WTC11 (cell line): ENCODE measurements at regions of chr17 and their contacts with region 1.

Region 1: GRCh38 chr17:74842599-74843351 is 16.9 kb downstream of the GRIN2C start:
- DNase-seq: peak; percentile 75
- ATAC-seq: peak; percentile 81
- H3K4me3 Mint-ChIP-seq: peak overlapping the region; percentile 22; the same call in 1 of the 2 replicates
- H3K27ac Mint-ChIP-seq: no peak overlapping the region
- H3K4me1 Mint-ChIP-seq: peaks cover 21% of the 10 kb centered on the region
- H3K27me3 Mint-ChIP-seq: peaks cover 52% of the 10 kb centered on the region
- CTCF ChIP-seq: no peak

Region 2: DNA sequence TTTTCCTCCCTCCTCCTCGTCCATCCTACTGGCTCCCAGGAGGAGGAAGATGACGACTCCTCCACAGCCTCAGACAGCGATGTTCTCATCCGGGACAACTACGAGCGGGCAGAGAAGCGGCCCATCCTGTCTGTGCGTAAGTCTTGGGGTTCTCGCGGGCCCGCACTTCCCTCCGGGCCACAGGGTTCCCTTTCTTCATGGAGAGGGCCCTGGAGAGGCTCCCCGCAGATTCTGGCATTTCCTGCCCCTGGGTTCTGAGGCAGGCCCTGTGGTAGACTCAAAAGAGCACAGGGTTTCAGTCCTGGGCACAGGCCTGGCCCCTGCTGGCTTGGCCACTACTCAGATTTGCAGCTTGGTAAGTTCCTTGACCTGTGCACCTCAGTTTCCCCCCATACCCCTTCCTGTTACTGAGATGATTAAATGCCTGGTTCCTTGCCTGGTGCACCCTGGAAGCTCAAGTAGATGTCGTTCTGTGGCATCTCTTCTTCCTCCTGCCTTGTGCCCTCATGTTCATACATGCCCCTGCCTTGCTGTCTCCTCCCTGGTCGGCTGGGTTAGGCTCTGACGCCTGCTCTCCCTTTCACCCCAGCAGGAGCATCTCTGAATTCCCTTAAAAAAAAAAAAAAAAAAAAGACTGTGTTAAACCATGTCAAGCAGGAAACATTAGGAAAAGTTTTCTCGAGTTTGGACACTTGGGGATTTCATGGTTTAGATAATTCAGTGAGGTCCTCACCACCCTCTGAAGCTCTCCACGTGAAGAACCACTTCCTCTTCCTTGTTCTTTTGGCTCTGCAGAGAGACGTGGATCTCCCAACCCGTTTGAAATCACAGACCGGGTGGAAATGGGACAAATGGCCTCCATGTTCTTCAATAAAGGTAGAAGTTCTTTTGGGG is 52.4 kb before region 1 on chr17:
- CTCF ChIA-PET with region 1: interaction called, 20 read pairs
- POLR2A ChIA-PET with region 1: no interaction called
- DNase-seq: no peak
- ATAC-seq: no peak
- H3K4me3 Mint-ChIP-seq: no peak overlapping the region
- H3K27ac Mint-ChIP-seq: peak overlapping the region; percentile 80; the same call in 1 of the 2 replicates
- H3K4me1 Mint-ChIP-seq: peaks cover 6% of the 10 kb centered on the region
- H3K27me3 Mint-ChIP-seq: no peaks in the 10 kb centered on the region
- CTCF ChIP-seq: no peak

Region 3: DNA sequence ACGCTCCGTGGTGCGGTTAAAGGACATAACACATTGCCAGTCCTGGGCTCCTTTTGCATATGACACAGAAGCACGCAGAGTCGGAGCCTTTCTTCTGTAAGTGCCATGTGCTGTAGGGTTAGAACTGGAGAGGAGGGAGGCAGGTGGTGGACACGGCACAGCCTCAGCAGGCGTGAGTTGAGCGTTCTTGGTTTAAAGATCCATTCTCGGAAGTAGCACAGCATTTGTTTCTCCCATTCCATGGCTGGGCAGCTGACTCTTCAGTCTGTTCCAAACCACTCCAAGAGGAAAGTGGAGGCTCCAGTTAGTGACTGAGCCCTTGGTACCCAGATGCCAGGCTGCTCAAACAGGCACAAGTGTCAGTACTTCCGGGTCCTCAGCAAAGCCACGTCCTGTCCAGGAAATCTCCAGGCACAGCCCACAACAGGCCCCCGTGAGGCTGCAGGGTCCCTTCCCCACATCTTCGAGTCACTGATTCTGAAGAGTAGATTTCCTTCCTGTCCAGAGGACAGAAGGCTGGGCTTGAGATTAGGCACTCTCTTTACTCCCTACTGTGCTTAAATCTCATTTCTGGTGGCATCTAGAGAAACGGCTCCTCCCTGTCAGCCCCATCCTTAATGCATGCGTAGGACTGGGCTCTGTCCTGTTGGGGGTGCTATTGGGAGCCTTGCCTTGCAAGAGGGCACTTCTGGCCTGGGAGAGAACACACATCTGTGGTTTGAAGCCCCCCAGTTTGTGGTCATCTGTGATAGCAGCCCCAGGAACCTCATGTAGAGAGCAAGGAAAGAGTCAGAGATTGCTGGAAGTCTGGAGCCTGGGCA is 27.0 kb before region 1 on chr17:
- CTCF ChIA-PET with region 1: interaction called, 12 read pairs
- POLR2A ChIA-PET with region 1: no interaction called
- DNase-seq: peak; percentile 72
- ATAC-seq: peak; percentile 88
- H3K4me3 Mint-ChIP-seq: no peak overlapping the region
- H3K27ac Mint-ChIP-seq: no peak overlapping the region
- H3K4me1 Mint-ChIP-seq: peaks cover 8% of the 10 kb centered on the region
- H3K27me3 Mint-ChIP-seq: peaks cover 2% of the 10 kb centered on the region; the same call in 1 of the 2 replicates
- CTCF ChIP-seq: peak; percentile 36; the same call in 1 of the 2 replicates

Region 4: DNA sequence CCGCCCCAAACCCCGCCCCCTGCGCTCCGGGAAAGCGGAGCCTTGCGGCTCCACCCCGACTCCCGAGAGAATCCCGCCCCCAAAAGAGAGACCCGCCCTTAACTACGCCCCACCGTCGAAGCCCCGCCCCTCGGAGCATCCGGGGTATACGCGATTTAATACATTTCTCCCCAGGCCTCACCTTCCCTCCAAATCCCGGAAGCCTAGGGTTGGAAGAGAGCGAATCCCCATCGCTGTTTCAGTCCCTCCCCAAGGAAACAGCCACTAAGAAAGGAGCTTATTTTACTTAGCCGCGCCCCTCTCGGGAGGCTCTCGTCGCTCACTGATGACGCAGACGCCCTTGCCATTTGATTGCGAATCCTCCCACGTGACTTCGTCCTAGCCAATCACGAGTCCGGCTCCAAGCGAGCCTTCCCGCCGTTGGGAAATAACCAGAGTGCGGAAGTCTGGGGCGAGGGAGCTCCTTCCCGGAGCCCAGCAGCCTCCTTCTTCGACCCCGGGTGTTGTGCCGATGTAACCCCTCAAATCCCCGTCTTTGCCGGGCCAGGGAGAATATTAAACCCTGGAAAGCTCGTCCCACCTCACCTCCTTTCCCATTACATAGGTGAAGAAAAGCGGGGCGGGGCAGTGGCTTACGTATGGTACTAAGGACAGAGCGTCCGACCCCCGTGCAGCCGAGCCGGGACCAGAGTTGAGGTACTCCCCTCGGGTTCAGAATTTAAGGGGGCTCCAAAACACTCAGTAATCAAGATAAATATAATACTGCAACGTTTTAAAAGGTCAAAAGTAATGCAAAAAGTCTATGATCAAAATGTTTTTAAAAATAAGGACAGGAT is 30.5 kb after region 1 on chr17:
- CTCF ChIA-PET with region 1: interaction called, 347 read pairs
- POLR2A ChIA-PET with region 1: interaction called, 7 read pairs
- DNase-seq: peak; percentile 99
- ATAC-seq: peak; percentile 91
- H3K4me3 Mint-ChIP-seq: peak overlapping the region; percentile 81
- H3K27ac Mint-ChIP-seq: peak overlapping the region; percentile 98
- H3K4me1 Mint-ChIP-seq: peaks cover 22% of the 10 kb centered on the region
- H3K27me3 Mint-ChIP-seq: peaks cover 8% of the 10 kb centered on the region
- CTCF ChIP-seq: no peak